ENCODE measurements at regions of chr2 and their contacts with region 1.

Region 1: DNA sequence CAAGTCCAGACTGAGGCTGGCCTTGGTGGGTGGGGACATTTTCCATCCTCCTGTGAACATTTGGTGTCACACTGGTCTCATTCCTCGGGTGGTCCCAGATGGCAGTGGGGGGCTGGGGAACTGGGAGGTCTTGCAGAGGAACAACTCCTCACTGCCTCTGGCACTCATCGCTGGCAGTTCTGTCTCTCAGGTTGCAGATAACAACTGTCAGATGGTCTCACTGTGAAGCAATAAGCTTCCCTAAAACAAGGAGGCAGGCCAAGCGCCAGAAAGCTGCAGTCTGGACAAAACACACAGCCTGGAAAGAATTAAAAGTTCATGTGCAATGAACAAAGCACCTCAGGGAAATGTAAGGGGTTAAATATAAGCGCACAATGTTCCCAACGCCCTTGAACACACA is 78.1 kb downstream of the IRS1 start:
- DNase-seq: no peak

Region 2: GRCh38 chr2:226037526-226037925 is 684.0 kb before region 1 on chr2:
- intact Hi-C with region 1: no loop called
- DNase-seq: no peak

Region 3: DNA sequence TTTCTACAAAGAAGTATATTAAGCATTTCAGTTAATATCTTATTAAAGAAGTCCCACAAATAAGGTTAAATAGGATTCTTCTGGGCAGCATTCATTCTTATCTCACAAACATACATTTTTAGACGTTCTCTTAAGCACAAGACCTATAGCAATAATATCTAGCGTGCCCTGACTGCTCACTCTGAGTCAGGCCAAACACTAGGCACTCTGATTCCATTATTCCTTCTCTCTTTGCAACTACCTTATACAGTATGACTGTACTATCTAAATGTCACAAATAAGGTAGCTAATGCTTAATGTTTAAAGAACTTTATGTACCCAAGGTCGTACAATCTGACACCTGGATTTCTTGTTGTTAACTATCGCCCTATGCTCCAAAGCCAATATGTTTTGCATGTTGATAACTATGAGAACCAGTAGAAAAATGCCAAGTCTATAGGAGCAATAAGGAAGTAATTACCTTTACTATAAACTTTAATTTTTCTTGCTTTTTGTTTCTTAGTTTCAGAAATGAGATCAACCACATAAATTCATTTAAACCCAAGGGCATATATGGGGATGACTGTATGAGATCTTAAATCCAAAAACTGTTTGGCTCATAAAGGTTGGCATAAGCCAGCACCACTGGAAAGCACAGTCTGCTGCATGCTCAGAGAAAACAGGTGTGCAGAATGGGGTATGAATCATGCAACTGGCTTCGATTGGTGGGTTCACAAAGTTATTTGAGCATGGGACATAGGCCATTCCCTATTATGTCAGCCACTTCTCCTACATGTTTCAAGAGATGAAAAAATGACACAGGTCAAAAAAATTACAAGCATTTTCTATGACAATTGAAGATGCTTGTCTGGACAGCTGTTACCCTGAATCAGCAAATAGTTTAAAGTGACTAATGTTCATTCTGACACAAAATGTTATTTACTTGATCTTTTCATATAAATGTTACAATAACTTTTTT is 273.9 kb before region 1 on chr2:
- intact Hi-C with region 1: no loop called
- DNase-seq: no peak

Region 4: GRCh38 chr2:226649871-226650660 is 71.5 kb before region 1 on chr2:
- intact Hi-C with region 1: loop called (anchors 5 kb)
- DNase-seq: peak; percentile 80

Region 5: DNA sequence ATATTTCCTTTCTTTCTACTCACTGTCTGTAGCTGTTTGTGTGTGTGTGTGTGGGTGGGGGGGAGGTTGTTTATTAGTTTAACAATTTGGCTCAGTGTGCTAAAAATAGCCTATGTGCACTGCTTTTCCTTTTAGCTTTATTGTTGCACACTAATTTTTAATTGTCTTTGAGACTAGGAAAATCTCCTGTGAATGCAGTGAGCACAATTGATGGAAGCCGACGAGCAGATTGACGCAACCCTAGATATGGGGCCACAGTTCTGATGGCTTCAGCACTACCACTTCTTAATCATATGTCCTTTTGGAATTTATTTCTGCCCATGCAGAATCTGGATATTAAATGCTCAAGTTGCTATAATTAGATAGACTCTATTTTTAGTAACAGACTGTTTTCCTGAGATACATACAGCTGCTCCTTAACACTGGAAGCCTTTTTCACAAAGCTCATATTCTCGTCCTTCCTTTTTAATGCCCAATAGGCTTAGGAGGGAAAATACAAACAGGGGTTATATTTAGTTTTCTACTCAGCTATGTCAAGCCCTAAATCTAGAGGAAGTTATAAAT is 31.0 kb before region 1 on chr2:
- intact Hi-C with region 1: loop called (anchors 5 kb)
- DNase-seq: no peak

Measured in cardiac septum (tissue), 1 donor.